K562 (cell line): ENCODE measurements at regions of chr5 and their contacts with region 1.

Region 1: DNA sequence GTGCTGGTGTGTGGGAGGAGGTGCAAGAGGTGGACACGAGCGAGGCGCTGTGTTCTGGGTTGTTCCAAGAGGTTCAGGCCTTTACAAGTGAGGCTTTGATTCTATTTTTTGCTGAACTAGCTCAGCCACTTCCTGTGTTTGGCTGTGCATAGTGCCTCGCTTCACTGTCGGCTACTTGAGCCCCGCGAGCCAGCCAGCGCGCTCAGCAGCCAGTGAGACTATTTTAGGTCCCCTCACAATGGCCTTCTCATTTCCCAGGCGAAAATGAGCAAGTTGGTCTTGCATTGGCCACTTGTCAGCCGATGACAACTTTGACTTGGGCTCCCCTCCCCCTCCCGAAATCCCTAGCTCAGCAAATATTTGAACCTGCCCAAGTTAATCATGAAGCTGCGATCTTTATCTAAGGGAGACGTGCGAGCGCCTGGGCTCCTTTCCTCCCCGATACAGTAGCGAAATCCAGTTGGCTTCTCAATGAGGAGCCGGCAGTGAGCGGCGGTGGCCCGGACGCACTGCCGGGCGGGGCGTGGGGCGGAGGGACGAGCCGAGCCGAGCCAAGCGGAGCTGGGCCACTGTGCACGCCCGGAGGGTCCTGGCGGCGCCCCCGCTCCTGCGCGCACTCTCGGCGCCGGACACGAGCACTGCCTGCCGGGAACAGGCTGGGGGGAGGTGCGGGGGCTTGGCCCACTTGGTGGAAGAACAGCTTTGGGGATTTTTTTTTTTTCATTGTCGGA is 72.6 kb downstream of the PIK3R1 start:
- DNase-seq: peak; percentile 12 to 22 (median 21)
- ATAC-seq: peak; percentile 76
- H3K4me3 ChIP-seq: peak overlapping the region; percentile 9; the same call in 1 of the 2 replicates
- H3K27ac ChIP-seq: peak overlapping the region; percentile 31; the same call in 1 of the 3 replicates
- H3K4me1 ChIP-seq: peaks cover 14 to 16% of the 10 kb centered on the region in 2 experiments; a peak in 4 of 5 replicates
- H3K27me3 ChIP-seq: no peaks in the 10 kb centered on the region
- CTCF ChIP-seq: no peak
- EP300 ChIP-seq: no peak
- POLR2A ChIP-seq: no peak
- RAD21 ChIP-seq: no peak

Region 2: GRCh38 chr5:68333649-68334552 is 45.8 kb after region 1 on chr5:
- CTCF ChIA-PET with region 1: no interaction called
- POLR2A ChIA-PET with region 1: no interaction called
- in situ Hi-C with region 1: no loop called
- intact Hi-C with region 1: loop called (anchors 1 kb)
- DNase-seq: peak; percentile 44 to 75 (median 52)
- ATAC-seq: peak; percentile 85
- H3K4me3 ChIP-seq: no peak overlapping the region
- H3K27ac ChIP-seq: 0 out of 3 replicates have a peak overlapping the region, but pooled peaks have one; percentile 7
- H3K4me1 ChIP-seq: peaks cover 3 to 33% of the 10 kb centered on the region in 2 experiments; a peak in 3 of 5 replicates
- H3K27me3 ChIP-seq: no peaks in the 10 kb centered on the region; a peak in 1 of 5 replicates
- CTCF ChIP-seq: peak; percentile 53 to 60 (median 55)
- EP300 ChIP-seq: no peak; the same call in 1 of the 2 replicates
- POLR2A ChIP-seq: no peak
- RAD21 ChIP-seq: peak; percentile 21 to 70; a peak in 3 of 4 replicates

Region 3: DNA sequence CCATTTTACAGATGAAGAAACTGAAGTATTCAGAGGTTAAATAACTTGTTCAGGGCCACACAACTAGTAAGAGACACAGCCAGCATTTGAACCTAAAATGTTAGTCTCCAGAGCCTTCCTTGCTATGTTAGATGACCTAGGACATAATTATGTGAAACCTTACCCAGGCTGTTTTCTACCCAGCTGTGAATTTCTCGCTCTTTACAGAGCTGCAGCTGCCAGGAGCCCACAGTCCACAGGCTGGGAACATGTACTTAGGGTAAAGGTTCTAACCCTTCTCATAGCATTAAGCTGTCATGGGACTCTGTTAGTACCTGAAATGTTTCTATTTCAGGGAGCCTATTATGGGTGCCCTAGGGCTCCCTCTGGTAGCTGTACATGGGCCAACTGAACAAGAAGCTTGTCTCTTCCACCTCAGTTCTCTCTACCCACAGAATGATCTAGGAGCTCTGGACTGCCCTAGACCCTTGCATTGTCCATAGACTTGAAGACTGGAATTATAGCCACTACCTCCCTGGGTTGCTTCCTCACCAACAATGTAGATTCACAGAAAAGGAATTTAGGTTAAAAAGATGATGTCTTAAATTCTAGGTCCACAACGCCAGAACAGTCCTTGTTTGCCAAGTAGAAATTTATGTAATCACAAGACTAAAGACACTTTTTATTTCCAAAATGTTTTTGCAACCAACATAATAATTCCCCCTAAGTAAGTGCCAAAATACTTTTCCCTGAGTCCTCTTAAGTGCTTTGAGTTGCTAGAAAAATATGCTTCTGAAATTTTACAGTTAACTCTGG is 190.4 kb after region 1 on chr5:
- CTCF ChIA-PET with region 1: no interaction called
- POLR2A ChIA-PET with region 1: no interaction called
- in situ Hi-C with region 1: no loop called
- intact Hi-C with region 1: loop called (anchors 5 kb)
- DNase-seq: no peak
- ATAC-seq: no peak
- H3K4me3 ChIP-seq: no peak overlapping the region
- H3K27ac ChIP-seq: no peak overlapping the region
- H3K4me1 ChIP-seq: peaks cover 0 to 19% of the 10 kb centered on the region in 2 experiments; a peak in 3 of 5 replicates
- H3K27me3 ChIP-seq: no peaks in the 10 kb centered on the region
- CTCF ChIP-seq: no peak
- EP300 ChIP-seq: no peak
- POLR2A ChIP-seq: no peak
- RAD21 ChIP-seq: no peak

Region 4: DNA sequence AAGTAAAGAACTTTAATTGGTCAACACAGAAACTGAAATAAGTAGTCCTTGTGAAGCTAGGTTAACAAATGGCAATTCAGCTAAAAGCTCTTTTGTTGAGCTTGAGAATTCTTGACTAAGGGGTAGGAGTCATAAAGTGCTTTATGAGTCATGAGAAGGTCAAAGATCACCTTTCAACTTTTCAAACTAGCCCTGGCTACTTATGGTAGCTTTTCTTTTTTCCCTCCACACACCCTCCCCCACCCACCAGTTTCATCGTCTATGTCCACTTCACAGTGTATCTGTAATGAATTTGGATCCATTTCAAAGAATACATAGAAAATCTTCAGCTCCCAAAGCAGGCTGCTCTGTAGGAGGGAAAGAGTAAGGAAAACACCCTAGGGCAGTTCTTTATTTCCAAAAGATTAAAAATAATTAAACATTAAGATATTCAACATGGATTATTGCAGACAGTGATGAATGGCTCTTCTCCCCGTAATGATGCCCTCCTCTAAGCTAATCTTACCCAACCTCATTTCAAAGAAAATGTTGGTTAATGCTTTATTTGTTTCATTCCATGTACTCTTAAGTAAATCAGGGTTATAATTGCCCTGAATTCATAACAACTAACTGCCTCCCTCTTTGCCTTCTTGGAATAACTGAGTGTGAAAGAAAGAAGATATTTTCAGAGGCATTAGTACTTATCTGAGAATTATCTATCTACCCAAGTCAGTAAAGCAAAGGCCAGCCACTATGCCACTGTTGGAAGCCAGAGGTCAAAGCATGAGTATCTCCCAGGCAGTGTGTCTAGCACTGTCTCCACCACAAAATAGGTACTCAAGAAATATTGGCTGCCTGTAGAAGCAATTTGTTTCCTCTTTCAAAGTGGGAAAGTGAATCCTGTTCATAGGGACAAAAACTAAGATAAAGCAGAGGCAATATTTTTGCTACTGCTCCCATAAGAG is 218.0 kb after region 1 on chr5:
- CTCF ChIA-PET with region 1: no interaction called
- POLR2A ChIA-PET with region 1: no interaction called
- in situ Hi-C with region 1: no loop called
- intact Hi-C with region 1: no loop called
- DNase-seq: peak; percentile 13 to 56 (median 27)
- ATAC-seq: no peak
- H3K4me3 ChIP-seq: no peak overlapping the region
- H3K27ac ChIP-seq: no peak overlapping the region
- H3K4me1 ChIP-seq: no peaks in the 10 kb centered on the region; a peak in 1 of 5 replicates
- H3K27me3 ChIP-seq: no peaks in the 10 kb centered on the region
- CTCF ChIP-seq: no peak
- EP300 ChIP-seq: no peak
- POLR2A ChIP-seq: no peak
- RAD21 ChIP-seq: no peak

Region 5: DNA sequence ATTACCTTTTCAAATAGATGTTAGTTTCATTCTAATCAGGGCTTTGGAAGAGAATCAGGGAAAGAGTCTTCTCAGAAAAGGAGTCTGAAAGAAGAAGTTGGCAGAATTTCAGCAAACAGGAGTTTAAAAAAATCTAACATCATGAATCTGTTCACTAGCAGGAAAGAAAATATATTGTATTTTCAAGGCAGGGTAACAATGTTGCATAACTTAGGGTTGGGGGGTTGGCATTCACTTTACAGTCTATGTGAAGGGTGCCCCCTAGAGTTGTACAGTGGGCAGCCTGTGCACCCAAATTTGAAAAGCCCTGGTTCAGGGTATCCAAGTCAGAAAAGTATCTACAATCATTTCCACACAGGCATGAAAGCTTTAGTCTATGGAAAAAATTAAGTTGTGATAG is 457.3 kb after region 1 on chr5:
- CTCF ChIA-PET with region 1: no interaction called
- POLR2A ChIA-PET with region 1: no interaction called
- in situ Hi-C with region 1: no loop called
- intact Hi-C with region 1: loop called (anchors 1 kb)
- DNase-seq: peak in 2 of 4 experiments; percentile 13 to 19
- ATAC-seq: peak; percentile 68; the same call in 2 of the 3 replicates
- H3K4me3 ChIP-seq: no peak overlapping the region
- H3K27ac ChIP-seq: no peak overlapping the region
- H3K4me1 ChIP-seq: no peaks in the 10 kb centered on the region
- H3K27me3 ChIP-seq: peaks cover 2 to 10% of the 10 kb centered on the region in 2 experiments; a peak in 2 of 5 replicates
- CTCF ChIP-seq: peak; percentile 23 to 43 (median 41); a peak in 3 of 6 replicates
- EP300 ChIP-seq: no peak
- POLR2A ChIP-seq: no peak
- RAD21 ChIP-seq: peak in 1 of 2 experiments; percentile 57; a peak in 2 of 4 replicates

Region 6: GRCh38 chr5:69007726-69008368 is 719.7 kb after region 1 on chr5:
- CTCF ChIA-PET with region 1: interaction called, 11 read pairs
- POLR2A ChIA-PET with region 1: no interaction called
- in situ Hi-C with region 1: no loop called
- intact Hi-C with region 1: no loop called
- DNase-seq: peak; percentile 66 to 79 (median 69)
- ATAC-seq: peak; percentile 96
- H3K4me3 ChIP-seq: no peak overlapping the region
- H3K27ac ChIP-seq: no peak overlapping the region
- H3K4me1 ChIP-seq: no peaks in the 10 kb centered on the region
- H3K27me3 ChIP-seq: peaks cover 0 to 3% of the 10 kb centered on the region in 2 experiments; a peak in 1 of 5 replicates
- CTCF ChIP-seq: peak; percentile 84 to 94 (median 90)
- EP300 ChIP-seq: no peak
- POLR2A ChIP-seq: no peak
- RAD21 ChIP-seq: peak; percentile 81 to 86